A673 (cell line): ENCODE measurements at regions of chr5 and their contacts with region 1.

Region 1: DNA sequence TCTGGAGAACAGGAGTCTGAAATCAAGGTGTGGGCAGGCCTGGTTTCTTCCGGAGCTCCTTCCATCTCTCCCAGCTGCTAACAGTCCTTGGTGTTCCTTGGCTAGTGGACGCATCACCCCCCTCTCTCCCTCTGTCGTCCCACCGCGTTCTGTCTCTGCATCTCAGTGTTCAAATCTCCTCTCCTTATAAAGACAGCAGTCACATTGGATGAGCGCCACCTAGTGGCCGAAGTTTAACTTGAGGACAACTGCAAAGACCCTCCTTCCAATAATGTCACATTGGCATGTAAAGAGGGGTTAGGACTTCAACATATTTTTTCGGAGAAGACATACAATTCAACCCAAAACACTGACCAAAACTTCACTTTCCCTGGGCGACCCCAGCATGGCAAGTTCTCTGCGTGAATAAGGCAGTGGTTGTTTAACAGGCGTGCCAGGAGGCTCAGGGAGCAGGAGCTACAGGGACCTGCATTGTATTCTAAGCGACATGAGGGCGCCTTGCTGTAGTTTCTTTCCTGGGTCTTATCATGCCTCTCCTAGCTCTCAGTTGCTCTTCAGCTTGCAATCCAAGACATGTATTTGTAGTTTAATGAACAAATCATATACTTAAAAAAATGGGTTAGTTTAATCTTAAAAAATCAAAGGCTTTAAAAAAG is 27.9 kb upstream of the BASP1 start:
- DNase-seq: peak; percentile 93
- H3K4me3 ChIP-seq: no peak overlapping the region
- H3K27ac ChIP-seq: peak overlapping the region; percentile 79
- H3K4me1 ChIP-seq: peaks cover 34% of the 10 kb centered on the region
- H3K27me3 ChIP-seq: no peaks in the 10 kb centered on the region
- CTCF ChIP-seq: peak; percentile 95

Region 2: DNA sequence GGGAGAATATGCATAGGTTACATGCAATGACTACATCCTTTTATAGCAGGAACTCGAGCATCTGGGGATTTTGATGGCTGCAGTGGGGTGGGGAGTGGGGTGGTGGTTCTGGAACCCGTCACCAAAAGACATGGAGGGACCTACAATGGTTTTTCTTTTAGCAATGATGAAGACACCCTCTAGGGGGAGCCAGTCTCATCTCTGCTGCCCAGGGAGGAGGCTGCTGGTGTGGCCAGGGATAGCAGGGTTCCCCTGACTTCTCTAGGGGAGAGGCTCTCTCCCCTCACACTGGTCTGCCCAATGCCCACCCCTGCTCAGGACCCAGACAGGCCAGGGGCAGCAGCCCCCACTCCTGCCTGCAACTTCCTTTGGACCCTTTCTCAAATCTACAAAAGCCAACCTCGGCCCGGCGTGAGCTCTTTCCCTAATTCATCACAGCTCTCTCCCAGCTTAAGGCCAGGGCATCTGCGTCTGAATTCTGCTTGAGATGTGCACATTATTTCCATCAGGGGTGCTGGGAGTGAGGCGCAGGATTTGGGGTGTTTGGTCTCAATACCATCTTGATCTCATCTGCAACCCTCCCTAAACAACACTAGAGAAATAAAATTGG is 499.2 kb before region 1 on chr5:
- CTCF ChIA-PET with region 1: no interaction called
- POLR2A ChIA-PET with region 1: no interaction called
- intact Hi-C with region 1: loop called (anchors 1 kb)
- DNase-seq: peak; percentile 80
- H3K4me3 ChIP-seq: no peak overlapping the region
- H3K27ac ChIP-seq: no peak overlapping the region
- H3K4me1 ChIP-seq: peaks cover 9% of the 10 kb centered on the region
- H3K27me3 ChIP-seq: no peaks in the 10 kb centered on the region
- CTCF ChIP-seq: peak; percentile 82

Region 3: DNA sequence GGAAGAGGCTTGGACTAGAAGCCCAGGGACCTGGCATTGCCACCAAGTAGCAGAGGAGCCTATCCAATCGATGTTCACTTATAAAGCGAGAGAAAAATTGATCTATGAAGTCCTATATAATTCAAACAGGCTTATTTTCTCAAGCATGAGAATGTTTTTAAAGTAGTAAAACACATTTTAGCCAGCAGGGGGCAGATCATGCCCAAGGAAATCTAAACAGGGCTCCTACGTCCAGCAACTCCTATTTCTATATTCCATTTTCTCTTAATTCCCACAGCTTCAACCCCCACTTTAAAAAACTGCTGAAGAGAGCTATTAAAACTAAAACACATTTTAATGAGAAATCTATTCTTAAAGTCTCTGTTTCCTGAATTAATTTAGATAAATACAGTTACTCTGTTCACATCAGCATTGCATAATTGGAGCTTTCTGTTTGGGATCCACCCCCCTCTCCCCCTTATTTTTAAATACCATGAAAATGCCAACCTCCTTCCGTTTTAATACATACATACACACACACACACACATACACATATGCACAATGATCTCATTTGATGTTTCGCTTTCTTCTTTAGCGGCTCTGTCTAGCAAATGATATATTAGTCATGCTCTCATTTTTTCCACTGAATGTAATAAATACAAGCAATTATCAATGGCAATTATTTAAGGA is 398.3 kb before region 1 on chr5:
- CTCF ChIA-PET with region 1: interaction called, 18 read pairs
- POLR2A ChIA-PET with region 1: interaction called, 5 read pairs
- intact Hi-C with region 1: loop called (anchors 1 kb)
- DNase-seq: peak; percentile 94
- H3K4me3 ChIP-seq: no peak overlapping the region
- H3K27ac ChIP-seq: peak overlapping the region; percentile 65
- H3K4me1 ChIP-seq: peaks cover 70% of the 10 kb centered on the region
- H3K27me3 ChIP-seq: no peaks in the 10 kb centered on the region
- CTCF ChIP-seq: peak; percentile 74

Region 4: GRCh38 chr5:16944816-16945562 is 244.5 kb before region 1 on chr5:
- CTCF ChIA-PET with region 1: interaction called, 5 read pairs
- POLR2A ChIA-PET with region 1: interaction called, 11 read pairs
- intact Hi-C with region 1: loop called (anchors 1 kb)
- DNase-seq: peak; percentile 61
- H3K4me3 ChIP-seq: no peak overlapping the region
- H3K27ac ChIP-seq: peak overlapping the region; percentile 99
- H3K4me1 ChIP-seq: peaks cover 30% of the 10 kb centered on the region
- H3K27me3 ChIP-seq: no peaks in the 10 kb centered on the region
- CTCF ChIP-seq: no peak